CD14-positive monocyte (primary cell): ENCODE measurements at regions of chr15 and their contacts with region 1.

Region 1: DNA sequence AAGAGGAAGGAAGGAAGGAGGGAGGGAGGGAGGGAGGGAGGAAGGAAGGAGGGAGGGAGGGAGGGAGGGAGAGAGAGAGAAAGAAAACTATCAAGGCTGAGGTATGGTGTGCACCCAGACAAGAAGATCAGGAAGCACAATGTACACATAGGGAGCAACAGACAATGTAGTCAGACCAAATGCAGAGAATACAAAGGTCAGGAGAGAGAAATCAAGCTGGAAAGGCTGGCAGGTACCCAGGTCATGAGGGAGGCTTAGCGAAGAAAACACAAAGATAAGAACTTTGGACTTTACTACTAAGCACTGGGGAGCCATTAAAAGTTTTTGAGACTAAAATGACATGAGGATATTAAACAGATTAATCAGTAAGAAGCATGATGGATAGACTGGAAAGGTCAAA is 176.0 kb upstream of the TMCO5A start:
- DNase-seq: no peak
- H3K4me3 ChIP-seq: no peak overlapping the region
- H3K4me3 Mint-ChIP-seq: no peak overlapping the region
- H3K27ac ChIP-seq: no peak overlapping the region
- H3K27ac Mint-ChIP-seq: no peak overlapping the region
- H3K4me1 ChIP-seq: no peaks in the 10 kb centered on the region
- H3K4me1 Mint-ChIP-seq: no peaks in the 10 kb centered on the region
- H3K27me3 ChIP-seq: no peaks in the 10 kb centered on the region
- H3K27me3 Mint-ChIP-seq: peaks cover 0 to 3% (median 0%) of the 10 kb centered on the region in 3 donors
- CTCF ChIP-seq: no peak

Region 2: DNA sequence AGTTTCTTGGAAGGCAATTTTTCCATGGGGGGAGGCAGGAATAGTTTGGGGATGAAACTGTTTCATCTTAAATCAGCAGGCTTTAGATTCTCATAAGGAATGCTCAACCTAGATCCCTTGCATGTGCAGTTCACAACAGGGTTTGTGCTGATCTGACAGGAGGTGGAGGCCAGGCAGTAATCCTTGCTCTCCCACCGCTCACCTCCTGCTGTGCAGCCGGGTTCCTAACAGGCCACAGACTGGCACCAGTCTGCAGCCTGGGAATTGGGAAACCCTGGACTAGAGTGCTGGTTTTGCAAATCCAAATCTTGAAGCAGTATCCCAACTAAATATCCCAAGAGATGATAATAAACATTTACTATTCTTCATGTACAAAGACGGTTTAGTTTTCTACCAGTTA is 80.3 kb before region 1 on chr15:
- intact Hi-C with region 1: loop called in 1 of 2 experiments (anchors 10 kb)
- DNase-seq: no peak
- H3K4me3 ChIP-seq: no peak overlapping the region
- H3K4me3 Mint-ChIP-seq: no peak overlapping the region
- H3K27ac ChIP-seq: no peak overlapping the region
- H3K27ac Mint-ChIP-seq: no peak overlapping the region
- H3K4me1 ChIP-seq: no peaks in the 10 kb centered on the region
- H3K4me1 Mint-ChIP-seq: no peaks in the 10 kb centered on the region
- H3K27me3 ChIP-seq: no peaks in the 10 kb centered on the region
- H3K27me3 Mint-ChIP-seq: peaks cover 0 to 2% (median 0%) of the 10 kb centered on the region in 3 donors
- CTCF ChIP-seq: no peak

Region 3: DNA sequence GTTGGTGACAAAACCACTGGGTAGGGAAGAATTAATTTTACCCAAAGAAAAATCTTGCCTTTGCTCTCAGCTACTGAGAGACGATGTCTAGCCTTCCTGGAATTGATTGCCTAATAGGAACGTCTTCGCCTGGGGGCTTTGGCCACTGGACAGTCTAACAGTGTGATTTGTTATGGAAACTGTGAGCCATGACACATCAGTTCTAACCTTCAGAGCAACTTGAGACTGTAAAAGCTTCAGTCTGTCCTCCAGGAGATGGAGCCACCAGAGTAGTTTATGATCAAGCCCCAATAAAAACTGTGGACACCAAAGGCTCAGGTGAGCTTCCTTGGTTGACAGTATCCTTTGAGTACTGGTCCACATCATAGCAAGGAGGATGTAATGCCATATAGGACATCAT is 59.7 kb before region 1 on chr15:
- intact Hi-C with region 1: no loop called
- DNase-seq: no peak
- H3K4me3 ChIP-seq: no peak overlapping the region
- H3K4me3 Mint-ChIP-seq: no peak overlapping the region
- H3K27ac ChIP-seq: no peak overlapping the region
- H3K27ac Mint-ChIP-seq: no peak overlapping the region
- H3K4me1 ChIP-seq: no peaks in the 10 kb centered on the region
- H3K4me1 Mint-ChIP-seq: no peaks in the 10 kb centered on the region
- H3K27me3 ChIP-seq: no peaks in the 10 kb centered on the region
- H3K27me3 Mint-ChIP-seq: no peaks in the 10 kb centered on the region
- CTCF ChIP-seq: no peak

Region 4: DNA sequence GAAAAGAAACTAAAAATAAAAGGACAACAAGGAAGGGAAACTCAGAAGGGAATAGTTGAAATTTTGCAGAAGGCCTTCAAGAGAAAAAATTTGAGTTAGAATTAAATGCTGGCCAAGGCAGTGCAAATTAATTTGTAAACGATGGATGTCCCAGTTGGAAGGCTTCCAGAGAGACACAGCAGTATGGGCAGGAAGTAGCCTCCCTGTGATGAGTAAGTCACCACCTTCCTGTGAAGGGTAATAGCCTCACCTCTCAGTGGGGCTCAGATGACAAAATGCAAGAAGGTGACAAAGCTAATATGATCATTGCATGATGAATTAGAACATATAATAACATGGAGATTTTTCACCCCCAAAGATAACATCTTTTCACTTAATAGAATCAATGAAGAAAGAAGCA is 148.7 kb after region 1 on chr15:
- intact Hi-C with region 1: no loop called
- DNase-seq: no peak
- H3K4me3 ChIP-seq: no peak overlapping the region
- H3K4me3 Mint-ChIP-seq: no peak overlapping the region
- H3K27ac ChIP-seq: no peak overlapping the region
- H3K27ac Mint-ChIP-seq: no peak overlapping the region
- H3K4me1 ChIP-seq: no peaks in the 10 kb centered on the region
- H3K4me1 Mint-ChIP-seq: no peaks in the 10 kb centered on the region
- H3K27me3 ChIP-seq: no peaks in the 10 kb centered on the region
- H3K27me3 Mint-ChIP-seq: peaks cover 0 to 3% (median 0%) of the 10 kb centered on the region in 3 donors
- CTCF ChIP-seq: no peak